Activated CD4-positive, alpha-beta memory T cell treated with anti-CD3 and anti-CD28 coated beads for 36 hours (primary cell): ENCODE measurements at regions of chr1 and their contacts with region 1.

Region 1: GRCh38 chr1:211281320-211282022 is 22.3 kb downstream of the RCOR3 start:
- DNase-seq: peak; percentile 19
- H3K4me3 Mint-ChIP-seq: no peak overlapping the region
- H3K27ac Mint-ChIP-seq: no peak overlapping the region
- H3K4me1 Mint-ChIP-seq: peaks cover 4% of the 10 kb centered on the region
- H3K27me3 Mint-ChIP-seq: no peaks in the 10 kb centered on the region

Region 2: GRCh38 chr1:211158866-211159265 is 122.6 kb before region 1 on chr1:
- CTCF ChIA-PET with region 1: no interaction called
- POLR2A ChIA-PET with region 1: no interaction called
- intact Hi-C with region 1: no loop called
- DNase-seq: no peak
- H3K4me3 Mint-ChIP-seq: no peak overlapping the region
- H3K27ac Mint-ChIP-seq: no peak overlapping the region
- H3K4me1 Mint-ChIP-seq: no peaks in the 10 kb centered on the region
- H3K27me3 Mint-ChIP-seq: peaks cover 4% of the 10 kb centered on the region

Region 3: GRCh38 chr1:211258756-211259637 is 22.5 kb before region 1 on chr1 and contains the start of gene RCOR3:
- CTCF ChIA-PET with region 1: interaction called, 3 read pairs
- POLR2A ChIA-PET with region 1: interaction called, 6 read pairs
- intact Hi-C with region 1: loop called (anchors 1 kb)
- DNase-seq: peak; percentile 95
- H3K4me3 Mint-ChIP-seq: peak within 1 kb of the TSS; percentile 83
- H3K27ac Mint-ChIP-seq: peak within 1 kb of the TSS; percentile 93
- H3K4me1 Mint-ChIP-seq: peaks cover 16% of the 10 kb centered on the region
- H3K27me3 Mint-ChIP-seq: no peaks in the 10 kb centered on the region
- total RNA-seq, gene RCOR3: 30.2 to 32.7 TPM

Region 4: GRCh38 chr1:211296396-211296795 is 14.9 kb after region 1 on chr1:
- CTCF ChIA-PET with region 1: interaction called, 3 read pairs
- POLR2A ChIA-PET with region 1: interaction called, 3 read pairs
- intact Hi-C with region 1: loop called (anchors 1 kb)
- DNase-seq: no peak
- H3K4me3 Mint-ChIP-seq: no peak overlapping the region
- H3K27ac Mint-ChIP-seq: peak overlapping the region; percentile 42
- H3K4me1 Mint-ChIP-seq: peaks cover 31% of the 10 kb centered on the region
- H3K27me3 Mint-ChIP-seq: no peaks in the 10 kb centered on the region

Region 5: GRCh38 chr1:211305044-211305443 is 23.6 kb after region 1 on chr1:
- CTCF ChIA-PET with region 1: no interaction called
- POLR2A ChIA-PET with region 1: no interaction called
- intact Hi-C with region 1: loop called (anchors 1 kb)
- DNase-seq: peak; percentile 76
- H3K4me3 Mint-ChIP-seq: no peak overlapping the region
- H3K27ac Mint-ChIP-seq: peak overlapping the region; percentile 77
- H3K4me1 Mint-ChIP-seq: peaks cover 44% of the 10 kb centered on the region
- H3K27me3 Mint-ChIP-seq: no peaks in the 10 kb centered on the region